ENCODE measurements at regions of chr1 and their contacts with region 1.

Region 1: DNA sequence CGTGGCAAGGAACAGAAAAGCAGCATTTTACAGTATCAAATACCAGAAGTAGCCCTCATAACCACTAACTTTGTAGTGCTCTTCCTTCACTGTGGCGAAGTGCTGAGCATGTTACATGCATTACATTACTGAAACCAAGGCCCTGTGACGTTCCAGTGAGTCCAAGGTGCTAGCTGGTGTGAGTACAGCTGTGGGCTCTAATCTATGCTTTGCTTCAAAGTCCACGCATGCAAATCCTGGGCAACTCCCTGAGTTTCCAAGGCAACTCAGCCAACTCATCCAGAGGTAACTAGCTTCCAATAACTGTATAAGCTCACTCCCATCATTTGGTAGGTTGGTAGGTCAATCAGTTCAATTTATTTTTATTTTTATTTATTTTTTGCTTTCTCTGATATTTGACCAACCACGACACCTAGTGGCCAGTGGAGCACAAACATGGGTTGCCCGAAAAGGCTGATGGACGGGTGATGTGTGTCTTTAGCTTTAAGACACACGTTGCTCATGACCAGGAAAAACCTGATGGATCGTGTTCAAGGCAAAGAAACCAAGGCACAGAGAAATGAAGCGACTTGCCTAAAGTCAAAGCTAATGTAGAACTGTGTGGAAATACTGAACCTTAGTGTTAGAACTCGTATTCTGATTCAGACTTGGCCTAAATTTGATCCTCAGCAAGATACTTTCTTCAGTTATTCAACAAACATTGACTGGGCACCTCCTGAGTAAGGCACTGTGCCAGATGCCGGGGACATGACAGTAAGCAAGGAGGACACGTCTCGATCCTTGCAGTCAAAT is 73.0 kb downstream of the GNG12 start:
- DNase-seq: no peak
- H3K4me3 ChIP-seq: no peak overlapping the region
- CTCF ChIP-seq: peak; percentile 59

Region 2: DNA sequence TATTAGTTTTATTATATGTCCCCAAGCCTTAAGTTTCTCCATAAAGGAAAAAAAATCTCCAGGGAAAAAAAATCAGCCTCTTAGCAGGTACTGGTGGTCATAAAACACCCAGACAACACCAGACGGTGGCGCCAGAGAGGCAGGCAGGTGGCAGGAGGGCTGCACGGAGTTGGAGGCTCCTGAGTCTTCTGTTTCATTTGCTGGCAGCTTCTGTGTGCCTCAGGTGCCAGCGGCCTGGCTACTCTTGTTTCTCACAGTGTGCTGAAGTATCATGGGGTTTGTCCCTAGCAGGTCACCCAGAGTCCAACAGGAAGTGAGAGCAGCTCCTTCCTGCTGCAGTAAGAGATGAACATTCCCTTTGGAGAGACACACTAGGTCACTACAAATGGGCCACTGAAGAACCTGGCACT is 198.5 kb before region 1 on chr1:
- CTCF ChIA-PET with region 1: interaction called, 197 read pairs
- POLR2A ChIA-PET with region 1: interaction called, 3 read pairs
- DNase-seq: no peak
- H3K4me3 ChIP-seq: no peak overlapping the region
- CTCF ChIP-seq: peak; percentile 93

Region 3: DNA sequence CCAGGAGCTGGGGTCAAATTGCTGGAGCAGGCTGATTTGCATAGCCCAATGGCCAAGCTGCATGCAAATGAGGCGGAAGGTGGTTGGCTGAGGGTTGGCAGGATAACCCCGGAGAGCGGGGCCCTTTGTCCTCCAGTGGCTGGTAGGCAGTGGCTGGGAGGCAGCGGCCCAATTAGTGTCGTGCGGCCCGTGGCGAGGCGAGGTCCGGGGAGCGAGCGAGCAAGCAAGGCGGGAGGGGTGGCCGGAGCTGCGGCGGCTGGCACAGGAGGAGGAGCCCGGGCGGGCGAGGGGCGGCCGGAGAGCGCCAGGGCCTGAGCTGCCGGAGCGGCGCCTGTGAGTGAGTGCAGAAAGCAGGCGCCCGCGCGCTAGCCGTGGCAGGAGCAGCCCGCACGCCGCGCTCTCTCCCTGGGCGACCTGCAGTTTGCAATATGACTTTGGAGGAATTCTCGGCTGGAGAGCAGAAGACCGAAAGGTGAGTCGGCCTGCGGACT is 75.1 kb before region 1 on chr1 and contains the start of gene GADD45A:
- CTCF ChIA-PET with region 1: interaction called, 66 read pairs
- POLR2A ChIA-PET with region 1: interaction called, 32 read pairs
- DNase-seq: peak; percentile 98
- H3K4me3 ChIP-seq: peak within 1 kb of the TSS; percentile 91
- CTCF ChIP-seq: no peak

Region 4: DNA sequence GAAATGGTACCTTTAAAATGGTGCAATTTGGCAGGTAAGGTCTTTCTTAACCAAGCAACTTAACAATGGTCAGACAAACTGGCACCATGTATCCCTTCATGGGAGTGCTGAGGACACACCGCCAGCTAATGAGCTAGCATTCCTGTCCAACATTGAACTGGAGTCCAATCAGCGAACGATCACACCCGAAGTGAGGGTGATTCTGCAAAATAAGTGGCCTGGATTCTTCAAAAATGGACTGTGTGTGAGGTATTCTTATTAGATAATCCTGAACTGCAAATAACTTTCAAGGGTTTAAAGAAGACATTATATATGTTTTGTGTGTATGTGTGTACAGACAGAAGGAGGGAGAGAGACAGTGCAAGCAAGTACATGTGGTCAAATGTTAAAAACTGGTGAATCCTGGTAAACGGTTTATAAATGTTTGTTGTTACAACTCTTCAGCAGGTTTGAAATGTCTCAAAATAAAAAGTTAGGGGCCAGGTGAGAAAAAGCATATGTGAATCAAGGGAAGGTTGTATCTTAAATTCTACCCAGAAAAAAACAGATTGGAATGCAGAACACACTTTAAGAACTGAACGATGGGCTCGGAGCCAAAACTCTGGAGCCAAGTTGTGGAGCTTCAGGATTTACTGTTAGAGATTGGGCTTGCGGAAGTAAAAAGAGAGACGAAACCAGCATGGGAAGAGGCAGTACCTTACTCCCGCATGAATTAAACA is 54.3 kb before region 1 on chr1:
- CTCF ChIA-PET with region 1: interaction called, 18 read pairs
- POLR2A ChIA-PET with region 1: no interaction called
- DNase-seq: no peak
- H3K4me3 ChIP-seq: no peak overlapping the region
- CTCF ChIP-seq: no peak

Region 5: GRCh38 chr1:67748630-67749029 is 11.6 kb before region 1 on chr1:
- CTCF ChIA-PET with region 1: interaction called, 53 read pairs
- POLR2A ChIA-PET with region 1: no interaction called
- DNase-seq: no peak
- H3K4me3 ChIP-seq: no peak overlapping the region; the same call in 1 of the 2 replicates
- CTCF ChIP-seq: no peak

Region 6: DNA sequence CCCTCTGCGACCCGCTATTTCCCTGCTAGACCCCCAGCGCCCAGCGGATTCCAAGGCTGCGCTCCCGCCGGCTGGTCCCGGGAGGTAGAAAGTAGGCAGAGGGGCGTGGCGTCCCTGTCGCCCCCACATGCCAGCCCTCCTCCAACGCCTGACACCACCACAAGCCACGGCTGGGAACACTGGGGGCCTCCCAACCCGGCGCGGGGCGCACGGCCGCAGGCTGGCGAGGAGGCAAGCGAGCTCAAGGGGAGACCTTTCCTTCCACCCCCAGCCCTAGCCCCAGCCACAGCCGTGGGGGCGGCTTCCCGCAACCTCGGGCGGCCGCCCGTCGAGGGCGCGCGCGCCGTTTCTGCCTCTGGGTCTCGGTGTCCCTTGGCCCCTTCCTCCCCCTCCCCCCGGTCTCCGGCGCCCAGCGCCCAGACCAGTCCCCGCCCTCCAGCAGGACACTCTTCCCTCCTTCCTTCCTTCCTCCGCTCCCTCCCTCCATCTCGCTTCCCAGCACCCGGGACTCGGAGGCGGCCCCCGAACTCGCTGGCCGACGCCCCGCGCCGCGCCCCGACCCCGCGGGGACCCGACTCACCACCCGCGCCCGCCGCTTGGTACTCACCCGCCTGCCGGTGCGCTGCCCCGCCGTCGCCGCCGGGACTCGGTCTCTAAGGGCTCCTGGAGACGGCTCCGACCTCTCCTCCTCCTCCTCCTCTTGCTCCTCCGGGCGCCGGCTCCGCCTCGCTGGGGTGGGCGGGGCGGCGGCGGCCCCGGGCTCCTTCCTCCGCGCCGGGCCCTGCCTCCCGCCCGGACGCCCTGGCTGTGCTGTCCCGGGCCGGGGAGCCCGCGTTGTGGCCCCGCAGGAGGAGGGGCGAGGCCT is 72.7 kb after region 1 on chr1 and contains the start of gene GNG12:
- CTCF ChIA-PET with region 1: interaction called, 42 read pairs
- POLR2A ChIA-PET with region 1: no interaction called
- DNase-seq: no peak
- H3K4me3 ChIP-seq: peak within 1 kb of the TSS; percentile 80
- CTCF ChIP-seq: no peak

Measured in AG04449 (cell line).